Activated B cell treated with CpG ODN at 0.5 μM for 24 hours (primary cell): ENCODE measurements at regions of chr3 and their contacts with region 1.

Region 1: GRCh38 chr3:25618028-25618427 is 46.7 kb downstream of the TOP2B start:
- DNase-seq: no peak
- ATAC-seq: no peak
- H3K4me3 Mint-ChIP-seq: no peak overlapping the region
- H3K27ac Mint-ChIP-seq: no peak overlapping the region
- H3K4me1 Mint-ChIP-seq: no peaks in the 10 kb centered on the region
- H3K27me3 Mint-ChIP-seq: no peaks in the 10 kb centered on the region
- CTCF ChIP-seq: no peak

Region 2: GRCh38 chr3:25604107-25604805 is 13.8 kb before region 1 on chr3:
- CTCF ChIA-PET with region 1: no interaction called
- POLR2A ChIA-PET with region 1: no interaction called
- intact Hi-C with region 1: loop called (anchors 2 kb)
- DNase-seq: no peak
- ATAC-seq: no peak
- H3K4me3 Mint-ChIP-seq: no peak overlapping the region
- H3K27ac Mint-ChIP-seq: no peak overlapping the region
- H3K4me1 Mint-ChIP-seq: no peaks in the 10 kb centered on the region
- H3K27me3 Mint-ChIP-seq: no peaks in the 10 kb centered on the region
- CTCF ChIP-seq: no peak

Region 3: GRCh38 chr3:25633919-25634318 is 15.9 kb after region 1 on chr3:
- CTCF ChIA-PET with region 1: no interaction called
- POLR2A ChIA-PET with region 1: no interaction called
- intact Hi-C with region 1: loop called (anchors 2 kb)
- DNase-seq: no peak
- ATAC-seq: no peak
- H3K4me3 Mint-ChIP-seq: no peak overlapping the region
- H3K27ac Mint-ChIP-seq: no peak overlapping the region
- H3K4me1 Mint-ChIP-seq: peaks cover 10% of the 10 kb centered on the region
- H3K27me3 Mint-ChIP-seq: no peaks in the 10 kb centered on the region
- CTCF ChIP-seq: no peak